ENCODE measurements at regions of chr9 and their contacts with region 1.

Region 1: GRCh38 chr9:87861332-87861731 is 21.3 kb upstream of the SPATA31E1 start:
- DNase-seq: no peak
- ATAC-seq: no peak
- H3K4me3 ChIP-seq: no peak overlapping the region
- H3K27ac ChIP-seq: no peak overlapping the region
- H3K4me1 ChIP-seq: no peaks in the 10 kb centered on the region
- H3K27me3 ChIP-seq: no peaks in the 10 kb centered on the region
- CTCF ChIP-seq: no peak

Region 2: GRCh38 chr9:87370003-87370685 is 491.2 kb before region 1 on chr9:
- CTCF ChIA-PET with region 1: interaction called, 11 read pairs
- POLR2A ChIA-PET with region 1: no interaction called
- in situ Hi-C with region 1: no loop called
- intact Hi-C with region 1: no loop called
- DNase-seq: no peak
- ATAC-seq: no peak
- H3K4me3 ChIP-seq: no peak overlapping the region
- H3K27ac ChIP-seq: no peak overlapping the region
- H3K4me1 ChIP-seq: no peaks in the 10 kb centered on the region
- H3K27me3 ChIP-seq: no peaks in the 10 kb centered on the region
- CTCF ChIP-seq: no peak

Region 3: GRCh38 chr9:88255830-88256610 is 394.7 kb after region 1 on chr9:
- CTCF ChIA-PET with region 1: no interaction called
- POLR2A ChIA-PET with region 1: no interaction called
- in situ Hi-C with region 1: no loop called
- intact Hi-C with region 1: no loop called
- DNase-seq: no peak
- ATAC-seq: no peak
- H3K4me3 ChIP-seq: no peak overlapping the region
- H3K27ac ChIP-seq: no peak overlapping the region; the same call in 1 of the 2 replicates
- H3K4me1 ChIP-seq: peaks cover 8% of the 10 kb centered on the region
- H3K27me3 ChIP-seq: no peaks in the 10 kb centered on the region
- CTCF ChIP-seq: no peak